ENCODE measurements at regions of chr2 and their contacts with region 1.

Region 1: GRCh38 chr2:201071479-201072200 is at the starts of genes HYCC2 and NDUFB3:
- DNase-seq: peak; percentile 94
- ATAC-seq: peak; percentile 99
- total RNA-seq, gene HYCC2: 14.5 TPM
- total RNA-seq, gene NDUFB3: 555 TPM

Region 2: DNA sequence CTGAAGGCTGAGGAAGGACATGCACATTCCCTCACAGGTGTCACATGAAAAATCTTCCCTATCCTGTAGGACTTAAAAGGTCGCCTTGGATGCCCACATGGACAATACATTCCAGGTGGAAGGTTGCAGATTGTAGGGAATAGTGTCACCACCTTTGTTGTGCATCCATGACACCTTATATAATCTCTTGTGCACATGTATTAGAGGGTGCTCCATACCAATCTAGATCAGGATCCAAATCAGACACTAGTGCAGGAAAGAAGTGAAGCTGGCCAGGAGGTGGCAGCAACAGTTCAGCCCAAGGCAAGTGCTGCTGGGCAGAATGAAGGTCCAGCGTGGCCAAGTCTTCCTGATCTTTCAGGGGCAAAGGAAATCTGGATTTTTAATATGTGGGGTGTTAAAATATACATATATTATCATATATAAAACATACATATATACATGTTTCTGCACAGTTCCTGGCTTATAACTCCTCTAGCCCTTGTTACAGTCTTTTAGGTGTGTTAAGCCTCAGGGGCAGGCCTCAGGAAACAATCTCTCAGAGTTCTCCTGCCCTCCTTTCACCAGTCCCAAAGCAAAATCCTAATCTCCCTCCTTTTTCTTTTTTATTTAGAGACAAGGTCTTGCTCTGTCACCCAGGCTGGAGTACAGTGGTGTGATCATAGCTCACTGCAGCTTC is 165.9 kb before region 1 on chr2:
- intact Hi-C with region 1: loop called (anchors 1 kb)
- DNase-seq: peak; percentile 77
- ATAC-seq: peak; percentile 72

Region 3: GRCh38 chr2:200963124-200963917 is 108.3 kb before region 1 on chr2 and contains the start of gene ORC2:
- intact Hi-C with region 1: loop called (anchors 1 kb)
- DNase-seq: peak; percentile 95
- ATAC-seq: peak; percentile 99
- total RNA-seq, gene ORC2: 20.3 TPM

Region 4: GRCh38 chr2:201040867-201041628 is 30.6 kb before region 1 on chr2:
- intact Hi-C with region 1: no loop called
- DNase-seq: no peak
- ATAC-seq: no peak

Region 5: DNA sequence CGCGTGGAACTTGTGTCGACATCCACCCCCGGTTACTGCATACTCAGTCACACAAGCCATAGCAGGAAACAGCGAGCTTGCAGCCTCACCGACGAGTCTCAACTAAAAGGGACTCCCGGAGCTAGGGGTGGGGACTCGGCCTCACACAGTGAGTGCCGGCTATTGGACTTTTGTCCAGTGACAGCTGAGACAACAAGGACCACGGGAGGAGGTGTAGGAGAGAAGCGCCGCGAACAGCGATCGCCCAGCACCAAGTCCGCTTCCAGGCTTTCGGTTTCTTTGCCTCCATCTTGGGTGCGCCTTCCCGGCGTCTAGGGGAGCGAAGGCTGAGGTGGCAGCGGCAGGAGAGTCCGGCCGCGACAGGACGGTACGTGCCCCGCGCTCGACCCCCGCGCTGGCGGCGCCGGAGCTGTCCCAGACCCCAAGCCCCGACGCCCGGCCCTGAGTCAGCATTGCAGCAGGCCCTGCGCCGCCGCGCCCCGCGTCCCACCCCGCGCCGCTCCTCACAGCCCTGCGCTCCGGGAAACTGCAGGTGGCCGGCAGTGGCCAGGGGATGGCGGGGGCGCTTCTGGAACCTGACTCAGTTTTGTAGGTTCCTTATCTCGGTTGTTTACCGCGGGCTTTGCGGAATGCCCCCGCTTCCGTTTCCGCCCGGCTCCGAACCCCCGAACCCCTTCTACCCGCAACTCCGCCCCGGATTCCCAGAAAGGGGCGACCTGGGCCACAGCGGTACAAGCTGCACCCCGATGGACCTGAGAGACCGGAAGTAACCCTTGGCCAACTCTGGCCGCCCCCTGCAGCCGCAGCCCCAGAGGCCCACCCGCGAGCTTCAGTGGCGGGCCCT is 44.7 kb after region 1 on chr2 and contains the start of gene CFLAR:
- intact Hi-C with region 1: loop called (anchors 2 kb)
- DNase-seq: peak; percentile 91
- ATAC-seq: peak; percentile 59
- total RNA-seq, gene CFLAR: 218 TPM

Region 6: DNA sequence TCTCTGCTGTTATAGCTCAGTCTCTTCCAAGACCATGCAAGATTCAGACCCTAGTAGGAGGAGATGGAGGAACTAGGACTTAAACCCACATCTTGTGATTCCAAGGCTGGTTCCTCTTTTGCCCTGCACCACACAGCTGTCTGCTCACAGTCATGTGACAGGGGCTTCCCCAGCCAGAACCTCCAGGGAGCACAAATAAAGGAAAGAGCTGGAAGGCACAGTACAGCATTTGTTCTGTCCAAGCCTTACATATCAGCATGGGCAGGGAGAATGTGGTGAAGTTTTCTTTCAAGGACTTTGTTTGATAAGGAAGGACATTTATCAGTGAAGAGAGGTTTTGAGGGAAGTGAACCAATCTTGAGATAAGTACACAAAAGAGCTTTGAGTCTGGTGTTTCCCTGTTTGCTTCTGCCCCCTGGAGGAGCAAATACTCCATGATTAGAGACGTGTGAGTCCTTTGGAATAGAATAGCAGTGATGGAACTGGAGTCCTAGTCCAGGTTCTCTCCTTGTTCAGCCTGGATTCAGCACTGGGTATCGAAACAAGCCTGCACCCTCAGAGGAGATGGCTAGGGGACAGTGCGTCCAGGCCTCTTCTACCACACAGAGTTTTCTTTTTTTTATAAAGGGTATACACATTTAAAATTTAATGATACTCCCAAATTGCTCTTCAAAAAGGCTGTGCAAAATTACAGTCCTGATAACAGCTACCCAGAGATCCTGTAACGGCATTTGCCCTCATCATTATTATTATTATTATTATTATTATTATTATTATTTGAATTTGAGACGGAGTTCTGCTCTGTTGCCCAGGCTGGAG is 86.7 kb after region 1 on chr2:
- intact Hi-C with region 1: loop called (anchors 5 kb)
- DNase-seq: peak; percentile 73
- ATAC-seq: peak; percentile 84

Region 7: GRCh38 chr2:201171259-201171814 is 99.7 kb after region 1 on chr2:
- intact Hi-C with region 1: loop called (anchors 5 kb)
- DNase-seq: no peak
- ATAC-seq: no peak

Region 8: DNA sequence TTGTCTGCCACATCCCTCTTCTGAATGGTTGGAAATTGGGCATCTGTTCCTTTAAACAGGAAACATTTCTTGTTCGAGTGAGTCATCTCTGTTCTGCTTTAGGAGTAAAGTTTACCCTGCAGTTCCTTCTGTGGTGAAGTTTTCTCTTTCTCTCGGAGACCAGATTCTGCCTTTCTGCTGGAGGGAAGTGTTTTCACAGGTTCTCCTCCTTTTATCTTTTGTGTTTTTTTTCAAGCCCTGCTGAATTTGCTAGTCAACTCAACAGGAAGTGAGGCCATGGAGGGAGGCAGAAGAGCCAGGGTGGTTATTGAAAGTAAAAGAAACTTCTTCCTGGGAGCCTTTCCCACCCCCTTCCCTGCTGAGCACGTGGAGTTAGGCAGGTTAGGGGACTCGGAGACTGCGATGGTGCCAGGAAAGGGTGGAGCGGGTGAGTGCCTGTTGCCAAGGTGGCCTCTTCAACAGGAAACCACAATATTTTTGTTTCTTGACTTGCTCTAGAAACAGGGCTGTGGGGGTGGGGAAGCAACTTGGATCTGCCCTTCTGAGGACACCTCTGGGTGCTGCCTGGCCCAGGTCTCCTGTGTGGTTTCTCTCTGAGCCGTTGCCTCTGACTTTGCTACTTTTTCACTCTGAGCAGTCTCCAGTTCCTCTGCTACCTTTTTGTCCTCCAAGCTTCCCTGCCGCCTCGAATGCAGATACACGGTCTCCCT is 186.5 kb after region 1 on chr2:
- intact Hi-C with region 1: no loop called
- DNase-seq: peak; percentile 79
- ATAC-seq: peak; percentile 77

Region 9: GRCh38 chr2:201298462-201299052 is 226.9 kb after region 1 on chr2:
- intact Hi-C with region 1: no loop called
- DNase-seq: no peak
- ATAC-seq: no peak

Measured in Right ventricle myocardium inferior (tissue), 1 donor.